Activated naive CD4-positive, alpha-beta T cell treated with anti-CD3 and anti-CD28 coated beads for 36 hours (primary cell): ENCODE measurements at regions of chr3 and their contacts with region 1.

Region 1: GRCh38 chr3:17233398-17233800 is 348.6 kb downstream of the PLCL2 start:
- DNase-seq: peak; percentile 51
- H3K4me3 Mint-ChIP-seq: no peak overlapping the region
- H3K27ac Mint-ChIP-seq: no peak overlapping the region
- H3K4me1 Mint-ChIP-seq: peaks cover 20% of the 10 kb centered on the region
- H3K27me3 Mint-ChIP-seq: no peaks in the 10 kb centered on the region

Region 2: DNA sequence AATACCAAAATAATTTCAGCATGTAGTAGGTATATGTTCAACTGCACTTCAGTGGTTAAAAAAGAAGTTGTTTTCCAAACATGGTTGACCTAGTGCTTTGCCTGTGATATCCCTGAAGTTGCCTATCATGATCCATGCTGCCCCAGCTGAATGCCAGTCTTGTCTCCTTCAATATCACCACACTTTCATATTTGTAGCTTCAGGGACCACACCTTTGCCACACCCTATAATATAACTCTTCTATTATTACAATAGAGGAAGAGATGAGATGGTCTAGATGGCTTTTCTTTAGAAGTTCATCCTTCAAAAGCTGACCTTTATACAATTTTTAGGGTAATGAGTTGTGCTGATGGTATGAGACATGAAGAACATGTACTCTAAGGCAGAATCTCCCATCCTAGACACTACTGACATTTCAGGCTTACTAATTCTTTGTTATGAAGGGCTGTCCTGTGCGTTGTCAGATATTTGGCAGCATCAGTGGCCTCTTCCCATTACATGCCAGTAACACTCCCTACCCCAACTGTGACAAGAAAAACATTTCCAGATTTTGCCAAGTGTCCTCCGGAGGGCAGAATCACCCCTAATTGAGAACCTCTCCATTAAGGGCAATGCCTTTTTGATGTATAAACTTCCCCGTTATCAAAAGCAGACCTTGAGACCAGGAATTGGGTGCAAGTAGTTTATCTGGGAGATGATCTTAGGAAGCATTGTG is 424.8 kb before region 1 on chr3:
- CTCF ChIA-PET with region 1: no interaction called
- intact Hi-C with region 1: loop called (anchors 2 kb)
- DNase-seq: peak; percentile 32
- H3K4me3 Mint-ChIP-seq: no peak overlapping the region
- H3K27ac Mint-ChIP-seq: no peak overlapping the region
- H3K4me1 Mint-ChIP-seq: peaks cover 20% of the 10 kb centered on the region
- H3K27me3 Mint-ChIP-seq: no peaks in the 10 kb centered on the region

Region 3: DNA sequence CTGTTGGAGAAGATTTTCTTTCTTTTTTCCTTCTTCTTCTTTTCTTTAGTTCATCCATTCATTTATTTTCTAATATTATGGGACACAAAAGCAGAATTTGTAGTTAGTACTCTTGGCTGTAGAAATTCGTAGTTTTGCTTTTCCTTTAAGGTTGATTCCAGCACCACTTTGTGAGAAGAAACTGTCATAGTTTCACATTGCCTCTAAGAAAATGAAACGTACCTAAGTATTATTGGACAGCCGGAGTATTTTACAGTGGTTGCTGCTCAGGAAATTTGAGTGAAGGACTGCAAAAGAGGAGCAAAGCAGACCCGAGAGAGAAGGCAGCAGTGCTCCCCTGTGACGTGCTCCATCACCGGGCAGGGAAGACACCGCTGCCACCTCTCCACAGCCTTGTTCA is 300.5 kb before region 1 on chr3:
- CTCF ChIA-PET with region 1: no interaction called
- intact Hi-C with region 1: loop called (anchors 5 kb)
- DNase-seq: no peak
- H3K4me3 Mint-ChIP-seq: peak overlapping the region; percentile 69
- H3K27ac Mint-ChIP-seq: peak overlapping the region; percentile 16
- H3K4me1 Mint-ChIP-seq: peaks cover 92% of the 10 kb centered on the region
- H3K27me3 Mint-ChIP-seq: no peaks in the 10 kb centered on the region

Region 4: DNA sequence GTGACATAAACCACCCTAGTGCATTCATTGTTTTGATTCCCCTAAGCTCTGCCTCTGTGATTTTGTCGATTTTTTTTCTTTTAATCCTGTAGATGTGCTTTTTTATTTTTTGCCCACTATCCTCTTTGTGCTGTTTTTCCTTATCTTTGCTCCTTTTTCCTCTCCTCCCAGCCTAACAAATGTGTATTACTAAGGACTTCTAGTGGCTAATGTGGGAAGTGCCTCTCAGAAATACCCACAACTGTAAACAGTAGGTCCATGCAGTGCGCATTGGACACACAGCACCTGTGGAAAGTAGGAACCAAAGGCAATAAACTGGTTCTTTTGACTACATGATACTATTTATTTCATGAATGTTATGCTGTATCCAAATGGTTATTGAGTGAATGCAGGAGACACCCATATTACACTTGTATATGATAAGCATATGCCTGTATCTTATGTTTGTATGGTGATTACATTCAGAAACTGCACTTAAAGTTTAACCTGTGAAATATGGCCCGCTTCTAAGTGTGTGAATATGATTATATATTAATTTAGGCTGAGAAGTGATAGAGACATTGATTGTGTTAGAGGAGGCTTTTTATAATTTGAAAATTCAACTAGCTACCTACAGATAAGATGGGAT is 200.9 kb before region 1 on chr3:
- CTCF ChIA-PET with region 1: no interaction called
- intact Hi-C with region 1: loop called (anchors 5 kb)
- DNase-seq: no peak
- H3K4me3 Mint-ChIP-seq: no peak overlapping the region
- H3K27ac Mint-ChIP-seq: no peak overlapping the region
- H3K4me1 Mint-ChIP-seq: peaks cover 75% of the 10 kb centered on the region
- H3K27me3 Mint-ChIP-seq: no peaks in the 10 kb centered on the region

Region 5: DNA sequence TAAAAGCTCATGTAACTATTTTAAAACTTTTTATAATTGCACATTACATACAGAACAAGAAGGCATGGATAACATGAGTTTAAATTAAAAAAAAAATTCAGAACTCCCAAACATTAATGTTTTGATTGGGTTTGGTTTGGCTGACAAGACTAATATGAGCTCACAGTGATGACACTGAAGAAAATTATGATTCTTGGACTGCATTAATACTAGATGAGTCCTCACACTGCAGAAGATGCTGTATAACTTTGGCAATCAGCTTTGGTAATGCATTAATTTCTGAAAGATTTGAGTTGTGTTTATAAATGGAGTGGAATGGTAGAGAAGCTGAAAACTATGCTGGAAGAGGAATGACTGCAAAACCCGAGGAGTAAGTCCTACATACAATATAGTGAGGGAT is 10.2 kb after region 1 on chr3:
- CTCF ChIA-PET with region 1: no interaction called
- intact Hi-C with region 1: no loop called
- DNase-seq: no peak
- H3K4me3 Mint-ChIP-seq: no peak overlapping the region
- H3K27ac Mint-ChIP-seq: no peak overlapping the region
- H3K4me1 Mint-ChIP-seq: no peaks in the 10 kb centered on the region
- H3K27me3 Mint-ChIP-seq: no peaks in the 10 kb centered on the region

Region 6: DNA sequence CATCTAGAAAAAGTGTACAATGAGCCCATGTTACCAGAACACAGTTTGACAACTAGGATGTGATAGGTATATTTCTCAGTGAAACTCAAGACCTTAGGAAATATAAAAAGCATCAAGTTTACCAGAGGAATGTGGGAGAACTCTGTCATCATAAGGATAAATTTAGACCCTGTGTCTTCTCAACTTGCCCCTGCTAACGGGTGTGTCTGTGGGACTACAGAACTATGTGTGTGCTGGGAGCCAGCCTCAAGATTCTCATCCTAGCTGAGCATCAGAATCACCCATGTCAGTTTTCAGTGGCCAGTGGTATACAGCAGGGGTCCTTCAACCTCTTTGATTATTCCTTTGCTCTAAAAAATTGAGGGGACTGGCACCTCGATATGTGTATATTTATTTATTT is 44.6 kb after region 1 on chr3:
- CTCF ChIA-PET with region 1: no interaction called
- intact Hi-C with region 1: no loop called
- DNase-seq: no peak
- H3K4me3 Mint-ChIP-seq: no peak overlapping the region
- H3K27ac Mint-ChIP-seq: no peak overlapping the region
- H3K4me1 Mint-ChIP-seq: no peaks in the 10 kb centered on the region
- H3K27me3 Mint-ChIP-seq: no peaks in the 10 kb centered on the region

Region 7: DNA sequence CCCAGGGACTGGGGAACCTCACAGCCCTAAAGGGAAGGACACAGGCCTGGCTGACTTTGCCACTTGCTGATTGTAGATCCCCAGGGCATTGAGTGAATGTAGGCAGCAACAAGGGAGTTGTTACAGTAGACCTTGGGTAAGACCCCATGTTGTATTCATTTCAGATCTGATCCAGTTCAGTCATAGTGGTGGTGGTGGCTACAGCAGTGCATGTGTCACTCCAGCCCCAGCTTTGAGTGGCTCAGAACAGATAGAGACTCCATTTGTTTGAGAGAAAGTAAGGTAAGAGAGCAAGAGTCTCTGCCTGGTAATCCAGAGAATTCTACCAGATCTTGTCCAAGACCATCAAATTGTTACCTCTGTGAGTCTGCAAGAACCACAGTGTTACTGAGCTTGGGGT is 1470.4 kb after region 1 on chr3:
- CTCF ChIA-PET with region 1: no interaction called
- intact Hi-C with region 1: no loop called
- DNase-seq: no peak
- H3K4me3 Mint-ChIP-seq: no peak overlapping the region
- H3K27ac Mint-ChIP-seq: no peak overlapping the region
- H3K4me1 Mint-ChIP-seq: peaks cover 9% of the 10 kb centered on the region
- H3K27me3 Mint-ChIP-seq: no peaks in the 10 kb centered on the region